B cell (primary cell): ENCODE measurements at regions of chr7 and their contacts with region 1.

Region 1: DNA sequence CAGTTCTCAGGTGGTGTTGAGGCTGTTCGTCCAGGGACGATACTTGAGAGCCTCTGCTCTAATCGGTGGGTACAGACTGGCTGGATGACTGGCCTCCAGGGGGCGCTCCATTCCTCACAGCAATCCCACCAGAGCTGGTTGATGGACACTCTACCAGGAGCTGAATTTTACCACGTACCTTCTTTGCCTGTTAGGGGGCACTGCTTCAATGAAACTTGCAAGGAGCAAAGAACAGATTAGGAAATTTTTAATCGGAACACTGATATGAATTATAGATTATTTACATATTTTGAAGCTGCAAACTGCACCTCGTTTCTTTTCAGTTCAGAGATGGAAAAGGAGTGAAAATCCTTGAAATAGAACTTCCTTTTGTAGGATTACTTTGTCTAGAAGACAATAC is 44.9 kb downstream of the KBTBD2 start:
- DNase-seq: peak; percentile 91
- ATAC-seq: peak; percentile 100
- H3K4me3 ChIP-seq: no peak overlapping the region
- H3K4me3 Mint-ChIP-seq: no peak overlapping the region
- H3K27ac ChIP-seq: no peak overlapping the region
- H3K27ac Mint-ChIP-seq: no peak overlapping the region
- H3K4me1 ChIP-seq: peaks cover 6 to 7% of the 10 kb centered on the region in 2 donors
- H3K4me1 Mint-ChIP-seq: peaks cover 7% of the 10 kb centered on the region
- H3K27me3 ChIP-seq: peaks cover 0 to 7% (median 1%) of the 10 kb centered on the region in 4 experiments
- H3K27me3 Mint-ChIP-seq: peaks cover 18% of the 10 kb centered on the region
- CTCF ChIP-seq: peak; percentile 89

Region 2: GRCh38 chr7:32495298-32496176 is 351.2 kb before region 1 on chr7 and contains the start of gene AVL9:
- CTCF ChIA-PET with region 1: no interaction called
- POLR2A ChIA-PET with region 1: no interaction called
- intact Hi-C with region 1: loop called (anchors 5 kb)
- DNase-seq: peak; percentile 97
- ATAC-seq: peak; percentile 96
- H3K4me3 ChIP-seq: peak within 1 kb of the TSS; percentile 65 to 97 (median 91)
- H3K4me3 Mint-ChIP-seq: peak within 1 kb of the TSS; percentile 84
- H3K27ac ChIP-seq: peak within 1 kb of the TSS; percentile 85 to 98
- H3K27ac Mint-ChIP-seq: peak within 1 kb of the TSS; percentile 96
- H3K4me1 ChIP-seq: peaks cover 14 to 16% of the 10 kb centered on the region in 2 donors
- H3K4me1 Mint-ChIP-seq: peaks cover 36% of the 10 kb centered on the region
- H3K27me3 ChIP-seq: no peaks in the 10 kb centered on the region
- H3K27me3 Mint-ChIP-seq: no peaks in the 10 kb centered on the region
- CTCF ChIP-seq: no peak
- total RNA-seq, gene AVL9: 48.0 and 63.3 TPM in 2 replicates

Region 3: DNA sequence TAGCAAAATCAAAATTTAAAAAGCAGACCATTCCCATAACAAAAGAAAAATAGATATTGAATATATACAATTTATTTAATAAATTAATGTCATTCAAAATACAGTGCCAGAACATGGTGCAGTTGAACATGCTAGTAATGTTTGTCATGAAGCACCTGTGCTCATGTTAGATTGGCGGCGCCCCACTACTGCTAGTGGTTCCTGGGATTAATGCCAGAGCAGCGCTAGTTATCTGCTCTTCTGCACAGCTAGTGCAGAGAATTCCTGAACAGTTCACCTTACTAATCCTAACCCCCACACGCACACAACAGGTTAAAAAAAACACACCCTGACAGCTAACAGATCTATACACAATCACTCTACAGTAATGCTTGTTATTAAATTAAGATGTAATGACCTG is 21.4 kb after region 1 on chr7:
- CTCF ChIA-PET with region 1: interaction called, 19 read pairs
- POLR2A ChIA-PET with region 1: no interaction called
- intact Hi-C with region 1: no loop called
- DNase-seq: no peak
- ATAC-seq: no peak
- H3K4me3 ChIP-seq: no peak overlapping the region
- H3K4me3 Mint-ChIP-seq: no peak overlapping the region
- H3K27ac ChIP-seq: no peak overlapping the region
- H3K27ac Mint-ChIP-seq: peak overlapping the region; percentile 13
- H3K4me1 ChIP-seq: no peaks in the 10 kb centered on the region
- H3K4me1 Mint-ChIP-seq: peaks cover 7% of the 10 kb centered on the region
- H3K27me3 ChIP-seq: no peaks in the 10 kb centered on the region
- H3K27me3 Mint-ChIP-seq: no peaks in the 10 kb centered on the region
- CTCF ChIP-seq: no peak

Region 4: GRCh38 chr7:33040803-33041516 is 194.3 kb after region 1 on chr7:
- CTCF ChIA-PET with region 1: interaction called, 10 read pairs
- POLR2A ChIA-PET with region 1: no interaction called
- intact Hi-C with region 1: no loop called
- DNase-seq: peak; percentile 85
- ATAC-seq: peak; percentile 96
- H3K4me3 ChIP-seq: peak overlapping the region; percentile 26 to 79 (median 44)
- H3K4me3 Mint-ChIP-seq: peak overlapping the region; percentile 84
- H3K27ac ChIP-seq: peak overlapping the region; percentile 2 to 73
- H3K27ac Mint-ChIP-seq: peak overlapping the region; percentile 86
- H3K4me1 ChIP-seq: peaks cover 21 to 40% of the 10 kb centered on the region in 2 donors
- H3K4me1 Mint-ChIP-seq: peaks cover 67% of the 10 kb centered on the region
- H3K27me3 ChIP-seq: no peaks in the 10 kb centered on the region
- H3K27me3 Mint-ChIP-seq: no peaks in the 10 kb centered on the region
- CTCF ChIP-seq: no peak

Region 5: GRCh38 chr7:33128990-33129805 is 282.5 kb after region 1 on chr7 and contains the start of gene BBS9:
- CTCF ChIA-PET with region 1: interaction called, 6 read pairs
- POLR2A ChIA-PET with region 1: no interaction called
- intact Hi-C with region 1: loop called (anchors 2 kb)
- DNase-seq: peak; percentile 96
- ATAC-seq: peak; percentile 91
- H3K4me3 ChIP-seq: peak within 1 kb of the TSS; percentile 39 to 81 (median 62)
- H3K4me3 Mint-ChIP-seq: peak within 1 kb of the TSS; percentile 97
- H3K27ac ChIP-seq: peak within 1 kb of the TSS; percentile 22 to 79
- H3K27ac Mint-ChIP-seq: peak within 1 kb of the TSS; percentile 91
- H3K4me1 ChIP-seq: peaks cover 7 to 9% of the 10 kb centered on the region in 2 donors
- H3K4me1 Mint-ChIP-seq: peaks cover 24% of the 10 kb centered on the region
- H3K27me3 ChIP-seq: no peaks in the 10 kb centered on the region
- H3K27me3 Mint-ChIP-seq: no peaks in the 10 kb centered on the region
- CTCF ChIP-seq: peak; percentile 18
- total RNA-seq, gene BBS9: 45.2 and 48.4 TPM in 2 replicates